ENCODE measurements at regions of chr6 and their contacts with region 1.

Region 1: DNA sequence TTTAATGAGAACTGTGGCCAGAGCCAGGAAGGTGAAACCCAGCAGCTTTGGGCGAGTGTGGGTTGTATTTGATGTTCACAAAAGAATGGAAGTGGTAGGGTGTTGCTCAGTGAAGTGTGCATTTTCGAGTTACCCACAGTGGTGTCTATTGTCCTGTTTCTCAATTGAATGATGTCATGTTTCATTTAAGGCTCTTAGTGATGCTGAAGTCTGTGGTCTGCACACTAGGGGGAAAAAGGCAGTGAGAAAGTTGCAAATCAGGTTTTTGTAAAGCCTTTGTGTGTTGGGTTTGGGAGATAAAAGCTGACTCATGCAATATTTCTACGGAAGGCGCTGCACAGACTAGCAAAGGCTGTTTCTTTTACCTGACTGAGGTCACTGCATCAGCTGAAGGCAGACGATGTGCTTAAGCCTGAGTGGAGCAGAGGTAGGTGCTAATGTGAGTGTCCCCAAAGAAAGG is 121.1 kb downstream of the PLEKHG1 start:
- DNase-seq: no peak
- ATAC-seq: peak; percentile 96
- H3K4me3 Mint-ChIP-seq: peak overlapping the region; percentile 25
- H3K27ac Mint-ChIP-seq: peak overlapping the region; percentile 80
- H3K4me1 Mint-ChIP-seq: peaks cover 74% of the 10 kb centered on the region
- H3K27me3 Mint-ChIP-seq: no peaks in the 10 kb centered on the region
- CTCF ChIP-seq: no peak

Region 2: DNA sequence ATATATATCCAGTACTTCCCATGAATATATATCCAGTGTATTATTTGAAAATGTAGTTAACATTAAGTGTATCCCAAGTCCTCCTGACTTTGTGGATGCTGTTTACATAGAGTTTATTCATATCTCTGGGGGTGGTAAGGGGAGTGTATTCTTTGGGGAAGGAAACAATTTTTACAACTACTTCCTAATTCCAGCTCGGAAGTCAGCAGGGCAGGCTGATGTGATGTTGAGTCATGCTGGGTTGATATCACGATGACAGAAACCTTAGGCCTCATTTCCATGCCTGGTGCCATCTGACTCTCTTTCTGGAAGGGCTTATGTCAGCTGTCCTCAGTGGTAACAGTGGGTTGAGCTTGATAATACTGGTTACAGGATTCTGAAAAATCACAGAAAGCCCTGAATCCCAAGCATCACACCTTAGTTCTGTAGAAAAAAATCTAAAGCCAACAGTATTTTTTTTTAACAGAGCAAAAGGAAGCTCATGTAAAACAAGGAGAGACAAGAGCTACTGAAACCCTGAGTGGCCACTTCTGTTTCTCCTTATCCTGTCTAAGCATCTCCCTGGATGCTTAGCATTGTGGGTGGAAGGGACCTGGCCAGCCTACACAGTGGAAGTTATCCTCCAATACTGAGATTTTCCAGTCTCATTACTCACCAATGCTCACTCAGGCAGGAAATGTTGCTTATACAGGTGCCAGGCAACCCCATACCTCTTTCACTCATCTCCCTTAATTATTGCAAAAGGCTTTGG is 427.2 kb before region 1 on chr6:
- CTCF ChIA-PET with region 1: no interaction called
- POLR2A ChIA-PET with region 1: no interaction called
- intact Hi-C with region 1: no loop called
- DNase-seq: no peak
- ATAC-seq: no peak
- H3K4me3 Mint-ChIP-seq: no peak overlapping the region
- H3K27ac Mint-ChIP-seq: no peak overlapping the region
- H3K4me1 Mint-ChIP-seq: no peaks in the 10 kb centered on the region
- H3K27me3 Mint-ChIP-seq: peaks cover 11% of the 10 kb centered on the region
- CTCF ChIP-seq: no peak

Region 3: GRCh38 chr6:150673720-150674346 is 47.0 kb before region 1 on chr6:
- CTCF ChIA-PET with region 1: interaction called, 4 read pairs
- POLR2A ChIA-PET with region 1: interaction called, 10 read pairs
- intact Hi-C with region 1: no loop called
- DNase-seq: no peak
- ATAC-seq: no peak
- H3K4me3 Mint-ChIP-seq: no peak overlapping the region
- H3K27ac Mint-ChIP-seq: peak overlapping the region; percentile 14
- H3K4me1 Mint-ChIP-seq: peaks cover 53% of the 10 kb centered on the region
- H3K27me3 Mint-ChIP-seq: no peaks in the 10 kb centered on the region
- CTCF ChIP-seq: no peak

Region 4: DNA sequence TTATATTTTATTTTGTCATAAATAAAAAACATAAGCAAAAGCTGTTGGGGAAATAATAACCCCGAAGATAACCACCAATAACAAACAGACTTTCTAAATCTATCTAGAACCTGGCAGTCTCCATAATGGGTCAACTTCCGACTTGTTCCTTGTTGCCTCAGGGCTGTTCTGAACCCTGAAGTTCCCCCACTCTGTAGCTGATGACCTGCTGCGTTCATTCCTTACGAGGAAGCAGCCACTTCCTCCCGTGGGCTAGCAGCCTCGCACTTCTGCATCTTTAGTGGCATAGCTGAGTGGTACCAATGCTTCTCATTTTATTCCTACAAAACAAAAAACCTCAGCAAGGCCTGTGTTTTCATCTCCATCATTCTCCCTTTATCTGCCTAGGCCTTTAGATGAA is 18.1 kb before region 1 on chr6:
- CTCF ChIA-PET with region 1: no interaction called
- POLR2A ChIA-PET with region 1: interaction called, 12 read pairs
- intact Hi-C with region 1: loop called (anchors 2 kb)
- DNase-seq: no peak
- ATAC-seq: peak; percentile 74
- H3K4me3 Mint-ChIP-seq: peak overlapping the region; percentile 11
- H3K27ac Mint-ChIP-seq: peak overlapping the region; percentile 86
- H3K4me1 Mint-ChIP-seq: peaks cover 91% of the 10 kb centered on the region
- H3K27me3 Mint-ChIP-seq: no peaks in the 10 kb centered on the region
- CTCF ChIP-seq: no peak

Region 5: GRCh38 chr6:150732765-150733539 is 12.1 kb after region 1 on chr6:
- CTCF ChIA-PET with region 1: no interaction called
- POLR2A ChIA-PET with region 1: interaction called, 11 read pairs
- intact Hi-C with region 1: loop called (anchors 1 kb)
- DNase-seq: no peak
- ATAC-seq: peak; percentile 71
- H3K4me3 Mint-ChIP-seq: no peak overlapping the region
- H3K27ac Mint-ChIP-seq: peak overlapping the region; percentile 70
- H3K4me1 Mint-ChIP-seq: peaks cover 49% of the 10 kb centered on the region
- H3K27me3 Mint-ChIP-seq: no peaks in the 10 kb centered on the region
- CTCF ChIP-seq: no peak

Region 6: GRCh38 chr6:151958331-151958730 is 1237.5 kb after region 1 on chr6:
- CTCF ChIA-PET with region 1: no interaction called
- POLR2A ChIA-PET with region 1: no interaction called
- intact Hi-C with region 1: no loop called
- DNase-seq: no peak
- ATAC-seq: no peak
- H3K4me3 Mint-ChIP-seq: no peak overlapping the region
- H3K27ac Mint-ChIP-seq: no peak overlapping the region
- H3K4me1 Mint-ChIP-seq: no peaks in the 10 kb centered on the region
- H3K27me3 Mint-ChIP-seq: no peaks in the 10 kb centered on the region
- CTCF ChIP-seq: no peak